Right cardiac atrium (tissue), 5 donors: ENCODE measurements at regions of chr11 and their contacts with region 1.

Region 1: GRCh38 chr11:62025487-62026105 is 58.2 kb upstream of the FTH1 start:
- DNase-seq: peak; percentile 72 to 76 (median 75)
- ATAC-seq: peak; percentile 94 to 97
- H3K4me3 ChIP-seq: no peak overlapping the region
- H3K27ac ChIP-seq: peak overlapping the region; percentile 55
- H3K4me1 ChIP-seq: no peaks in the 10 kb centered on the region
- H3K27me3 ChIP-seq: no peaks in the 10 kb centered on the region

Region 2: GRCh38 chr11:61971248-61972111 is 54.1 kb before region 1 on chr11:
- intact Hi-C with region 1: loop called in 1 of 4 experiments (anchors 10 kb)
- DNase-seq: peak; percentile 97 to 99 (median 99)
- ATAC-seq: peak; percentile 73 to 77
- H3K4me3 ChIP-seq: no peak overlapping the region
- H3K27ac ChIP-seq: peak overlapping the region; percentile 99
- H3K4me1 ChIP-seq: peaks cover 31% of the 10 kb centered on the region
- H3K27me3 ChIP-seq: no peaks in the 10 kb centered on the region